Sigmoid colon (tissue), 7 donors: ENCODE measurements at regions of chr4 and their contacts with region 1.

Region 1: GRCh38 chr4:185591679-185592141 is 56.4 kb upstream of the PDLIM3 start:
- DNase-seq: no peak
- H3K4me3 ChIP-seq: no peak overlapping the region
- H3K27ac ChIP-seq: peak overlapping the region; percentile 60 to 72 (median 68)
- H3K4me1 ChIP-seq: peaks cover 0 to 20% (median 17%) of the 10 kb centered on the region in 4 donors
- H3K27me3 ChIP-seq: no peaks in the 10 kb centered on the region
- CTCF ChIP-seq: no peak
- EP300 ChIP-seq: no peak
- POLR2A ChIP-seq: no peak

Region 2: GRCh38 chr4:185425647-185426352 is 165.9 kb before region 1 on chr4 and contains the start of gene UFSP2:
- intact Hi-C with region 1: loop called (anchors 5 kb)
- DNase-seq: peak; percentile 95
- H3K4me3 ChIP-seq: peak within 1 kb of the TSS; percentile 57 to 84 (median 73)
- H3K27ac ChIP-seq: peak within 1 kb of the TSS; percentile 91 to 95 (median 92)
- H3K4me1 ChIP-seq: peaks cover 0 to 41% (median 19%) of the 10 kb centered on the region in 4 donors
- H3K27me3 ChIP-seq: no peaks in the 10 kb centered on the region
- CTCF ChIP-seq: no peak
- EP300 ChIP-seq: peak in 2 of 4 donors; percentile 43 to 56
- POLR2A ChIP-seq: peak; percentile 64 to 70
- total RNA-seq, gene UFSP2: 31.3 to 56.0 (median 48.6) TPM